PC-3 (cell line): ENCODE measurements at regions of chr2 and their contacts with region 1.

Region 1: DNA sequence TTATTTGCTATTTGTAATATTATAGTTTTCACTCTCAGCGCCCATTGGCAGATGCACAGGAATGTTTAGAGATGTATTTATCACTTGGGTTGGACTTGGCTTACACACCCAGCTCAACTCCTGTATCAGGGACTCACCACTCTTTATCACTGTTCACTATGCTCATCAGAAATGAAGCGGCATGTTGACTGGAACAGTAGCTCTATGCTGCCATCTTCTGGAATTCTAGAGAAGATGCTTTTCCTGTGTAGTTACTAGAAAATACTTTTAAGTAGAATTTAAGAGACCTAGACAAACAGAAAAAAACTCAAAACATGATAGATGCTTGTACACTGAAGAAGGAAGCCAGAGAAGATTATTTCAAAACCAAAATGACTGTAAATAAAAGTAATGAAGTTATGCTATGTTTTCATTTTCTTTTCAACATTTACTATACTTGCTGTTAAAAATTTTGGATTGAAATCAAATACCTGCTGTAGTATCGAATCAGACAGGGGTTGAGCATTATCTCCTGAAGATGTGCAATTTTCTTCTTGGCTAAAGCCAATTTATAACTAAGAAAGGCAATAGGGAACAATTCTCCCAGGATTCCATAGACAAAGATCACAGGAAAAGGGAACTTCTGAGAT is 47.4 kb upstream of the NXPH2 start:
- DNase-seq: peak; percentile 73
- ATAC-seq: peak; percentile 18; the same call in 1 of the 2 replicates
- H3K4me3 ChIP-seq: no peak overlapping the region
- H3K27ac ChIP-seq: no peak overlapping the region
- H3K4me1 ChIP-seq: peaks cover 33% of the 10 kb centered on the region
- H3K27me3 ChIP-seq: no peaks in the 10 kb centered on the region
- CTCF ChIP-seq: peak; percentile 83

Region 2: GRCh38 chr2:137865954-137866540 is 961.5 kb before region 1 on chr2:
- CTCF ChIA-PET with region 1: interaction called, 11 read pairs
- POLR2A ChIA-PET with region 1: no interaction called
- intact Hi-C with region 1: loop called (anchors 1 kb)
- DNase-seq: peak; percentile 75
- ATAC-seq: peak; percentile 71
- H3K4me3 ChIP-seq: no peak overlapping the region
- H3K27ac ChIP-seq: no peak overlapping the region
- H3K4me1 ChIP-seq: no peaks in the 10 kb centered on the region
- H3K27me3 ChIP-seq: peaks cover 6% of the 10 kb centered on the region
- CTCF ChIP-seq: peak; percentile 80

Region 3: GRCh38 chr2:137910641-137911040 is 916.9 kb before region 1 on chr2:
- CTCF ChIA-PET with region 1: interaction called, 3 read pairs
- POLR2A ChIA-PET with region 1: interaction called, 4 read pairs
- intact Hi-C with region 1: loop called (anchors 1 kb)
- DNase-seq: peak; percentile 71
- ATAC-seq: no peak
- H3K4me3 ChIP-seq: no peak overlapping the region
- H3K27ac ChIP-seq: no peak overlapping the region
- H3K4me1 ChIP-seq: no peaks in the 10 kb centered on the region
- H3K27me3 ChIP-seq: no peaks in the 10 kb centered on the region
- CTCF ChIP-seq: peak; percentile 83

Region 4: DNA sequence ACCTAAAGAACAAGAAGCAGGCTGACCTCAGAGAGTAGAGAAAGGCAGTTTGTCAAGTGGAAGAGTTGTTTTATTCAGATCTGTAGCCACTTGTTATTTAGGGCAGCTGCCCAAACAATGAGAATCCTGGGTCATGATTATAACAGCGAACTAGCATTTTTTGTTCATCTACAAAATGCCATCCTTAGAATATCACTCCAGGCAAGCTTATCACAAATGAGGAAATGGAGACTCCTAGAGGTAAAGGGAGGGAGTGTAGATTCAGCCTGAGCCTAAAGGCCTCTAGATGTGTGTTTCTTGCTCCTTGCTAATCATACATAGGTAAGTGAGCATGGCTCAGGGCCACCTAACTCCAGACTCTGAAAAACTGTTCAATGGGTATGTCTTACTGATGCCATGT is 737.2 kb before region 1 on chr2:
- CTCF ChIA-PET with region 1: no interaction called
- POLR2A ChIA-PET with region 1: no interaction called
- intact Hi-C with region 1: loop called (anchors 5 kb)
- DNase-seq: peak; percentile 72
- ATAC-seq: peak; percentile 72
- H3K4me3 ChIP-seq: no peak overlapping the region
- H3K27ac ChIP-seq: no peak overlapping the region
- H3K4me1 ChIP-seq: peaks cover 15% of the 10 kb centered on the region
- H3K27me3 ChIP-seq: no peaks in the 10 kb centered on the region
- CTCF ChIP-seq: peak; percentile 85

Region 5: DNA sequence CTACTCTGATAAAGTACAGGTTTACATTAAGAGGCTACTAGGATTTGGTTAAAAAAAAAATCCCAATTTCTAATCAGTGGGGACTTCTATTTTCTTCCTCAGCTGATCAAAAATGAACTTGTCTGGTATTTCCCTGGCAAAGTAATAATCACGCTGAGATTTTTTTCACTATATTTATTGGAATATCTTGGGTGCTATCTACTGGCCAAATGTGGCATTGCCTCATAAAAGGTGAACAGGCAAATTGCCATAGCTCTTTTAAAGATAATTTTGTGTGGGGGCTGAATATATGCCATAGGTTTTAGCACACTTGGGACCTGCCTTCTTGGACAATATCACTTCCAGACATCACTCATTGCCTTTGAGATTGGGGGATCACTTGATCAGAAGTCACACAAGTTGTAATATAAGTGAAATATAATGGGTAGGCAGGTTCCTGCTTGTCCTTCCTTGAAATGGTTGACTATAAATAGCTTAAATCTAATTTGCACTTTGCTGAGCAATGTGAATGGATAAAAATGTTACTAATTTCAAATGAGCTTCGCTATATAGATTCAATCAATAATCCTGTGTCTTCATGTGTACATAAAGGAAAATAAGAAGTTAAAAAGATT is 40.4 kb before region 1 on chr2:
- CTCF ChIA-PET with region 1: no interaction called
- POLR2A ChIA-PET with region 1: no interaction called
- intact Hi-C with region 1: loop called (anchors 2 kb)
- DNase-seq: peak; percentile 74
- ATAC-seq: no peak; the same call in 1 of the 2 replicates
- H3K4me3 ChIP-seq: no peak overlapping the region
- H3K27ac ChIP-seq: no peak overlapping the region
- H3K4me1 ChIP-seq: no peaks in the 10 kb centered on the region
- H3K27me3 ChIP-seq: peaks cover 12% of the 10 kb centered on the region
- CTCF ChIP-seq: peak; percentile 89